Motor neuron (in vitro differentiated cells): ENCODE measurements at regions of chr9 and their contacts with region 1.

Region 1: DNA sequence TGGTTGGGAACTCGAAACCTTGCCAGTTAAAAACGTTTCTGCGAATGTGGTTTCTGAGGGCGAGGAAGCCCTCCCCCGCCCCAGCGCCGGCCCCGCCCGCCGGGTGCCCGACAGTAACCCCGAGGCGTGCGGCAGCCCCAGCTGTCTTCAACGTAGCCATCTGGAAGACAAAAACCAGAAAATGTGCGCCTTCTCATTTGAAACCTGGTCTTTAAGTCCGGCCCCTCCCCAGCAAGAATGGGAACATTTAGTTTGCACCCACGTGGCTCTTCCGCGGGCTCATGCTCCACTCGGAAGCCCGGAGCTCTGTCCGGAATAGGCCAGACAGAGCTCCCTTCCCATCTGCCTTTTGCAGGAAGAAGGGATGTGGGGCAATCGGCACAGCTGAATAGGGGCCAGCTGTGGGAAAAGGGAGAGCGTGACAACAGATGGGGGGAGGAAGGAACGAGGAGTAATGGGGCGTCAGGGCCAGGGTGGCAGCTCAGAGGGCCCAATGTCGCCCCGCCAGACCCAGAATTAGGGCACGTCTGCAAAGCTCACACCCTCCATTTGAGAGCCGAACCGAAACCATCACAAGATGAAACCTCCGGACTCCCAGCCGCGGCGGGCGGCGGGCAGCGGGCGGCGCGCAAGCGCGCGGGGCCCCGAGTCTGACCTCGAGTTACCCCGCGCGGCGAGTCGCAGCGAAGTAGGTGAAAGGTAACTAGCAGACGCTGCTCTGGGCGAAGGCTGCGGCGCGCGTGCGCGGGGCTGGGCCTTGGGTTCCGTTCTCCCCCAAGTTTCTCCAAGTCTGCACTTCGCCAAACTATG is 63.4 kb upstream of the ABCA1 start:
- ATAC-seq: peak; percentile 55 to 81 (median 76)
- H3K4me3 ChIP-seq: peak overlapping the region; percentile 31 to 48 (median 35)
- H3K27ac ChIP-seq: peak overlapping the region; percentile 48 to 79
- H3K4me1 ChIP-seq: peaks cover 33 to 36% of the 10 kb centered on the region in 2 donors

Region 2: DNA sequence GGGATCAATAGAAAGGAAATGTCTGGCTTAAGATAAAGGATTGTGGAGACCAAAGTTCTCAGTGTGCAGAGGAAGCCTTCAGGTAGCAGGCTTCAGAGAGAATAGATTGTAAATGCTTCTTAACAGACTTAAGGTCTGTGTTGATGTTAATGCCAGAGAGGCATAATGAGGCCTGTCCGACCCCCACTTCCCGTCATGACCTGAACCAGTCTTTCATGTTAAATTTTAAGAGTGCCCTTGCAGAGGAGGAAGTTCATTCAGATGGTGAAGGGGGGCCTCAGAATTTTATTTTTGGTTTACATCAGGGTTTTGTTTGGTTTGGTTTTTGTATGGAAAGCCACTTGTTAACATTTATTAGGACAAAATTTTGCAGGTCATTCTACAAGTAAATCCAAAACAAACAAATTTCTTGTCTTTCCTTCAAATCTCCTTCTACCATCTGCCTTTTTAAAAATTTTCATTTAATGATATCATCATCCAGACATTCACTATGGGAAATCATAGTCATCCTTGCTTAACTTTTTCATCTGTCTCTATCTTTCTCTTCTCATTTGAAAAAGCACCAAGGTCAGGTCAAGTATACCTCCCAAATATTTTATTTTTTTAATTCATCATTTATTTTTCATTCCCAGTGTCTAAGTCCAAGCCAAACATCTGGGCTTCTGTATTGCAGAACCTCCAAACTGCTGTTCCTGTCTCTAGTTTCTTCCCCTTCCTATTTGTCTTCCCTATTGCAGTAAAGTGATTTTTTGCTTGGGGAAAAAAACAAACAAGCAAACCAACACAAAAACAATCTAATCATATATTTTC is 56.5 kb before region 1 on chr9:
- in situ Hi-C with region 1: loop called in 1 of 9 experiments (anchors 10 kb)
- ATAC-seq: no peak
- H3K4me3 ChIP-seq: no peak overlapping the region
- H3K27ac ChIP-seq: no peak overlapping the region
- H3K4me1 ChIP-seq: peaks cover 0 to 4% of the 10 kb centered on the region in 2 donors

Region 3: DNA sequence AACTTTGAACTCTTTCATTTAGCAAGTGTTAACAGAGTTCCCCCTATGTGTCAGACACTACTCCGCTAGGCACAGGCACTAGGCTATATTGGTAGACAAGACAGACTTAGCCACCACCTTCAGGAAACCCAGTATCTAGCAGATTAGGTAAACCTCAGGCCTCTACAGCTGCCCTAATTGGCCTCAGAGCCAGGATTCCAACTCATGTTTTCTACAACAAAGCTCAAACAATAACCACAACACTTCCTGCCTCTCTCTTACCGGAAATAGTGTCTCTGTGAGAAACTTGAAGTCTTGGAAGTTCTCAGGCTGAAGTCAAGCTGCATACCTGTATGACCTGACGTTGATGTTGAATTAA is 136.5 kb after region 1 on chr9:
- in situ Hi-C with region 1: loop called in 2 of 9 experiments (anchors 25 kb)
- ATAC-seq: peak in 1 of 8 experiments; percentile 79
- H3K4me3 ChIP-seq: no peak overlapping the region
- H3K27ac ChIP-seq: no peak overlapping the region
- H3K4me1 ChIP-seq: no peaks in the 10 kb centered on the region